ENCODE measurements at regions of chr17 and their contacts with region 1.

Region 1: DNA sequence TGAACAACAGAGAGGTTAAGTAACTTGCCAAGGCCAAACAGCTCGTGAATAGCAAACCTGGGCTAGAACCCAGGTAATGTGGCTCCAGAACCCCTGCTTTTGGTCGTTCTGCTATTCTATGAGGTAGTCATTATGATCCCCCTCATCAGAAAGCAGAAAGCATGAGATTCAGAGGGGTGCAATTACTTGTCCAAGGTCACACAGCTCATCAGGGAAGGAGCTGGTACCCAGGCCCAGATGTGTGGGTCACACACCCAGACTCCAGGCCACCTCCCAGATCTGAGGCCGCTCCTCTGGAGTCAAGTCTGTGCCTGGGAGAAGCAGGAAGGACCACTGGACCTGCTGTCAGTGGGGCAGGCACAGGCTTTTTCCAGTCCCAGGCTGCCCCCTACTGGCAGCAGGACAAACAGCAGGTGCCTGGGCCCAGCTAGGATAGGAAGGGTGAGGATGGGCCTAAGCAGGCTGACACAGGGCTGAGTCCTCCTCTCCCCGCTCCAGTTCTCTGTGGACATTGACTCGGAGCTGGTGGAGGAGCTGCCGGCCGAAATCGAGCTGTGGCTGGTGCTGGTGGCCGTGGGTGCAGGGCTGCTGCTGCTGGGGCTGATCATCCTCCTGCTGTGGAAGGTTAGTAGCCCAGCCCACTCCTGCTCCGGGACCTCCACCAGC is 7.8 kb upstream of the PDK2 start:
- DNase-seq: peak; percentile 83
- H3K4me3 Mint-ChIP-seq: no peak overlapping the region
- H3K27ac Mint-ChIP-seq: no peak overlapping the region
- H3K4me1 Mint-ChIP-seq: no peaks in the 10 kb centered on the region
- H3K27me3 Mint-ChIP-seq: no peaks in the 10 kb centered on the region

Region 2: DNA sequence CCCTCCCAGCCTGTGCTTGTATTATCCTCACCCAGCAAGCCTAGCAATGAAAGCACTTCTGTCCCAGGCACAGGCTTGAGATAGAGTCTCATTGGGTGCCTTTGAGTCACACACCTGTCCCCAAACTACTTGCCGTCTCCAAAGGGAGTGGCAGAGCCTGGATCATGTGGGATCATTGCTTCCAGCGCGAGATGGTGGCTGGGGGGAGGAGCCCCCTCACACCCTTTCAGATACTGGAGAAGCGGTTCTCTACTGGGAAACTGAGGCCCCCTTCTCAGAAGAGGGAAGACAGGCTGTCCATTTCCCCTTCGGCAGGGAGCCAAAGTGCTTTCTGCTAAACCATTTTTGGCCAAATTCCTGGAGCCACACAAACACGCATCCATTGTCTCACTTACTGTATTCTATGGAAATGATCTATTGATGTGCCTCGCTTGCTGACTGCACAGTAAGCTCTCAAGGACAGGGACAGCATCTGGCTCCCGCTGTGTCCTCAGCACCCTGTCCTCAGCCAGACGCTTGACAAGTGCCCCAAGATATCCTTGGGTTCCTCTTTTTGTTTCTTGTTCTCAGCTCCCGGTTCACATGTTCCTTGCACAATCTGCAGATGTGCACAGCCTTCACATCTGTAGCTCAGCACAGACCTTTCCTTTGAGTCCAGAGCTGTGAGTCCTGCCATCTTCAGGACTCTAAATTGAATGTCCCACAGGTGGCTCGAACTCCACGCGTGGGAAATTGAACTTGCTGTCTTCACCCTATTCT is 66.4 kb before region 1 on chr17:
- CTCF ChIA-PET with region 1: interaction called, 73 read pairs
- POLR2A ChIA-PET with region 1: interaction called, 4 read pairs
- DNase-seq: no peak
- H3K4me3 Mint-ChIP-seq: no peak overlapping the region
- H3K27ac Mint-ChIP-seq: no peak overlapping the region
- H3K4me1 Mint-ChIP-seq: no peaks in the 10 kb centered on the region
- H3K27me3 Mint-ChIP-seq: peaks cover 10% of the 10 kb centered on the region

Region 3: GRCh38 chr17:50055426-50056230 is 31.8 kb before region 1 on chr17 and contains the start of gene ITGA3:
- CTCF ChIA-PET with region 1: interaction called, 11 read pairs
- POLR2A ChIA-PET with region 1: no interaction called
- DNase-seq: peak; percentile 71
- H3K4me3 Mint-ChIP-seq: peak within 1 kb of the TSS; percentile 88
- H3K27ac Mint-ChIP-seq: peak within 1 kb of the TSS; percentile 24
- H3K4me1 Mint-ChIP-seq: peaks cover 50% of the 10 kb centered on the region
- H3K27me3 Mint-ChIP-seq: peaks cover 8% of the 10 kb centered on the region
- total RNA-seq, gene ITGA3: 12.5 to 13.4 TPM

Region 4: DNA sequence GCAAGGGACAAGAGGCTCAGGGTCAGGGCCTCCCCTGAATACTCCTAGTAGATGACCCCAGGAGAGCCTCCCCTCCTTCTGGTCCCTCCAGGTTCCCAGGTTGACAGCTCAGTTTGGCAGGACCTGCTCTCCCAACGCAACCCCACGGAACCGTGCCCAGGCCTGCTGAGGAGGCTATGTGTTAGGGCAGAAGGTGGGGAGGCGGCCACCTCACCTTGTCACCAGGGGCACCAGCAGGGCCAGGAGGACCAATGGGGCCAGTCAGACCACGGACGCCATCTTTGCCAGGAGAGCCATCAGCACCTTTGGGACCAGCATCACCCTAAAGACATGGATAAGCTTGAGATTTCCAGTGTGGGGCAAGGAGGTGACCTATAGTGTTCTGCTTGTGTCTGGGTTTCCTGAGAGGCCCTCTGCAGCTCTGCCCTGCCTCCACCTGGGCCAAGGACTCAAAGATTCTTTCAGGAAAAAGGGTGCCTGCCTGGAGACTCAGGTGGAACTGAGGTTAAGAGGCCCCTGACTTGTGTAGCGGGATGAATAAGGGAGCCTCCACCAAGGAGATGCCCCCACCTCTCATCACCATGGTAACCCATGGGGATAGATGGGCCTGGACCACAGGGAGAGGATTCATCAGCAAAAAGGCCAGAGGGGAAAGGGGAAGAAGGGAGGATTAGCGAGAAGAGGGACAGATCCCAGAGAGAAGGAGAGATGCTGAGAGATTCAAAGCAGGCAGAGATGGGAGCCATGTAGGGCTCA is 103.4 kb after region 1 on chr17:
- CTCF ChIA-PET with region 1: no interaction called
- POLR2A ChIA-PET with region 1: no interaction called
- DNase-seq: no peak
- H3K4me3 Mint-ChIP-seq: no peak overlapping the region
- H3K27ac Mint-ChIP-seq: no peak overlapping the region
- H3K4me1 Mint-ChIP-seq: no peaks in the 10 kb centered on the region
- H3K27me3 Mint-ChIP-seq: peaks cover 1% of the 10 kb centered on the region